PC-9 (cell line): ENCODE measurements at regions of chr11 and their contacts with region 1.

Region 1: DNA sequence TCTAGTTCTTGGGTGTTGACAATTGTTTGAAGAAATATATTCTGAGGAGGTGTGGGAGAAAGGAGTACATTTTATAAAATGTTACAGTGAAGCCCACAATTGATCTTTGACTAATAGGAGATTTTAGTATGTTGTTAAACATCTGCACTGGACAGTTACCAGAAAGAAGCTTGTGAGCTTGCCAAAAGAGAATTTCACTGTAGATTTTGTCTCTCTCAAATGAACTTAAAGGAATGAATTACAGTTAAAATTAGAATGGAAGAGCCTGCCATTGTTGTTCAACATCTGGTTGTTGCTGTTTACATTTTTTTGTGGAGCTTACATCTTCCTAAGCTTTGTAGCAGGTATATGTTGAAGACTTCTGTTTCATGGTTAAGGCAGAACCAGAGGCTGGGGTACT is 620.5 kb upstream of the CCDC179 start:
- DNase-seq: no peak
- H3K4me3 ChIP-seq: no peak overlapping the region
- H3K27ac ChIP-seq: no peak overlapping the region
- H3K4me1 ChIP-seq: no peaks in the 10 kb centered on the region
- H3K27me3 ChIP-seq: no peaks in the 10 kb centered on the region
- CTCF ChIP-seq: no peak

Region 2: DNA sequence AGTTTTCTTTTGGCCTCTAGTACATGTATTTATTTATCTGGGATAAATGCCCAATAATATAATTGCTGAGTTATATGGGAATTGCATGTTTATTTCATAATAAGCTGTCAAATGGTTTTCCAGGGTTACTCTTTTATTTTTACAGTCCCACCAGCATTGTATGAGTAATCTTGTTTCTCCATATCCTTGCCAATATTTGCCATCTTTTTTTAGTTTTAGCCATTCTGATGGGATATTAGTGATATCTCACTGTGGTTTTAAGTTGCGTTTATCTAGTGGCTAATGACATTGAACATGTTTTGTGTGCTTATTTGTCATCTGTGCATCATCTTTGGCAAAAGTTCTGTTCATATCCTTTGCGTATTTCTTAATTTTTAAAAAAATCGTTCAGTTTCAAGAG is 247.7 kb before region 1 on chr11:
- CTCF ChIA-PET with region 1: no interaction called
- POLR2A ChIA-PET with region 1: no interaction called
- intact Hi-C with region 1: loop called (anchors 10 kb)
- DNase-seq: no peak
- H3K4me3 ChIP-seq: no peak overlapping the region
- H3K27ac ChIP-seq: no peak overlapping the region
- H3K4me1 ChIP-seq: no peaks in the 10 kb centered on the region
- H3K27me3 ChIP-seq: no peaks in the 10 kb centered on the region
- CTCF ChIP-seq: no peak